Activated CD4-positive, alpha-beta T cell treated with anti-CD3 and anti-CD28 coated beads for 36 hours (primary cell): ENCODE measurements at regions of chrX and their contacts with region 1.

Region 1: DNA sequence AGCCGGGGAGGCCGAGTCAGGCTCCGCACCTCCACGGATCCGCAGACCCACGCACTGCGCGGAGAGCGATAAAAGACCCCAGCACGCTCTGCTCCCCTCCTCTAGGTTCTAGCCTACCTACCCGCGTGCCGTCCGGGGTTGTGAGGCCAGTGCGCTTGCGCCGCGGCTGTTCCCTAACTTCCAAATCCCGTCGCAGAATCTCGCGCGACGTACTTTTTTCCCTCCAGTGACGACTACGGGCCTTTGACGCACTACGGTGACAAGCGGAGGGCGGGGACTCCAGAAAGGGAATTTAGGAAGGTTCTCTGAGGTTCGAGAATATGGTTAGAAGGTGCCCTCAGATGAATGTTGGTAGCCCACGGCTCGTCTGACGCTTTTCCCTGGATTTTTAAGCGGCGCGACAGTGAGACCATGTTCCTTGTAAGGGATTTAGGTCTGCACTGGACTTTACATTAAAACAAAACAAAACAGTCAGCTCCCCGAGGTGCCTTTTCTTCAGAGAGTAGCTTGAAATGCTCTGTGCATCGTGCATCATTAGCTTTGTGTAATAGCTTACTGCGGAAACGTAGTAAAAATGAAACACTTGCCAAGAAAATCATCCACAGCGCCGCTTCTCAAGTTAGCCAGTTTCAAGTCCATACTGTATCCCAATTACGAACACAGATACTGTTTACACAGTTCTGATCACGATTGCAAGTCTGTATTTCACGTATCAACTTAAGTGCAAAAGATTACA is at the start of gene NKRF:
- DNase-seq: peak; percentile 94
- ATAC-seq: peak; percentile 88
- H3K4me3 Mint-ChIP-seq: peak within 1 kb of the TSS; percentile 93
- H3K27ac Mint-ChIP-seq: peak within 1 kb of the TSS; percentile 97
- H3K4me1 Mint-ChIP-seq: peaks cover 34% of the 10 kb centered on the region
- H3K27me3 Mint-ChIP-seq: no peaks in the 10 kb centered on the region
- total RNA-seq, gene NKRF: 23.8 to 25.0 TPM

Region 2: DNA sequence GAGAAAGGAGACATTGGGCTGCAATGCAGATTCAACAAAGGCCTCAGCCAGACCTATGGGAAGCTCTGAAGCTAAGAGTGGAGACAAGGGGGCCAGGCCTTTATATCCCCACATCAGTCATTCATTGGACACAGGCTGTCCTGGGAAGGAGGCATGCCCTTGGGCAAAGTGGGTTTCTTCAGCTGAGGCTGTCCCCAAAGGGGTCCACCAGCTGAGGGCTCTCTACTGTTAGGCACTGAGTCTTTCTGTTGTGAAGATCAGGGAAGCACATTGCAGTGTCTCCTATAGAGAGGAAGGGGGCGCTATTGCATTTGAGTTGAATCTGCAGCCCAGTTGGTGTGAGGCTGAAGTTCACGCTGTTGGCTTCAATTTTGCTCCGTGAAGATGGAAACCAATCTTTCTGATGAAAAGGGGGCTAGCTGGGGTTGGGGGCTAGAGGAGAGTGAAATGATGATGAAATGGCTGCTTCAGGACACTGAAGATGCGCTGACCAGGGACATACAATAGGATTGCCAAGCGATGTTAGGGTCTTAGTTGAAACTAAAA is 90.2 kb before region 1 on chrX:
- CTCF ChIA-PET with region 1: no interaction called
- POLR2A ChIA-PET with region 1: no interaction called
- intact Hi-C with region 1: loop called (anchors 2 to 5 kb)
- DNase-seq: peak; percentile 44
- ATAC-seq: peak; percentile 97
- H3K4me3 Mint-ChIP-seq: no peak overlapping the region
- H3K27ac Mint-ChIP-seq: no peak overlapping the region
- H3K4me1 Mint-ChIP-seq: peaks cover 4% of the 10 kb centered on the region
- H3K27me3 Mint-ChIP-seq: no peaks in the 10 kb centered on the region

Region 3: GRCh38 chrX:119574394-119575266 is 31.8 kb before region 1 on chrX and contains the start of gene UBE2A:
- CTCF ChIA-PET with region 1: interaction called, 4 read pairs
- POLR2A ChIA-PET with region 1: interaction called, 5 read pairs
- intact Hi-C with region 1: loop called in 1 of 2 experiments (anchors 1 kb)
- DNase-seq: peak; percentile 92
- ATAC-seq: peak; percentile 92
- H3K4me3 Mint-ChIP-seq: peak within 1 kb of the TSS; percentile 94
- H3K27ac Mint-ChIP-seq: peak within 1 kb of the TSS; percentile 87
- H3K4me1 Mint-ChIP-seq: peaks cover 24% of the 10 kb centered on the region
- H3K27me3 Mint-ChIP-seq: no peaks in the 10 kb centered on the region
- total RNA-seq, gene UBE2A: 49.2 to 67.9 TPM

Region 4: DNA sequence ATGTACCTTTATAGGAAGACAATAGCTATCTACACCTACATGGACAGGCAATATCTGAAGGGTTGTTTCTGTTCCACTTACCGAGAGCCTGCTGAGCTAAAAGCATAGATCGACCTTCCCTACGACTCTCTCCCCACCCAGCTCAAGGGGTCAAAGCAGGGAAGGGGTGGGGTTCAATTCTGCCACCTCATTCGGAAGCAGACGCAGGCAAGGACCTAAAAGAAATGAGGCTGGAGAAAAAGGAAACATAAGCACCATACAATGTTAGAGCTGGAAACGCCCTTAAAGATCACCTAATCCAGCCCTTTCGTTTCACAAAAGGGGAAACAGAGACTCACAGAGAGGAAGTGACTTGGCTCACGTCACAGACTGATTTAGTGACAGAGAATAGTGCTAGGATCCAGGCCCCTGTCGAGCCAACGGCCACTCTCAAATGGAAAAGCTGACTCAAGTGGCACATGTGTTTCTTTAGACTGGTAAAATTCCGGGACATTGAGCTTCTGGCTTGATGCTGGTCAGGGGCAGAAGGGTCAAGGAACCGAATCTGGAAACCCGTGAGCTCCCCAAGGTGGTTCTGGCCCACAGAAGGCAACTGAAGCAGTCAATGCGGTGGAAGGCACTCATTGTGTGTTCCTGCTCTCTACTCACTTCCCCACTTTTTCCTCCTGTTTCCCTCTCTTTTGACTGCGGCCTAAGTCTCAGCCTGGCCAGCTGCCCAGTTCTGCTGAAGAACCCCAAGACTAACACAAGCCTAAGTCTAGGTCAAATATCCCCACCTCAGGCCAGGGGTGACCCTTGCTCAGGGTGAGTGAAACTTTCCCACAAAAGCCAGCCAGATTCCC is 79.0 kb after region 1 on chrX:
- CTCF ChIA-PET with region 1: no interaction called
- POLR2A ChIA-PET with region 1: interaction called, 5 read pairs
- intact Hi-C with region 1: loop called in 1 of 2 experiments (anchors 2 kb)
- DNase-seq: peak; percentile 73
- ATAC-seq: peak; percentile 51
- H3K4me3 Mint-ChIP-seq: peak overlapping the region; percentile 98
- H3K27ac Mint-ChIP-seq: peak overlapping the region; percentile 98
- H3K4me1 Mint-ChIP-seq: peaks cover 54% of the 10 kb centered on the region
- H3K27me3 Mint-ChIP-seq: no peaks in the 10 kb centered on the region

Region 5: DNA sequence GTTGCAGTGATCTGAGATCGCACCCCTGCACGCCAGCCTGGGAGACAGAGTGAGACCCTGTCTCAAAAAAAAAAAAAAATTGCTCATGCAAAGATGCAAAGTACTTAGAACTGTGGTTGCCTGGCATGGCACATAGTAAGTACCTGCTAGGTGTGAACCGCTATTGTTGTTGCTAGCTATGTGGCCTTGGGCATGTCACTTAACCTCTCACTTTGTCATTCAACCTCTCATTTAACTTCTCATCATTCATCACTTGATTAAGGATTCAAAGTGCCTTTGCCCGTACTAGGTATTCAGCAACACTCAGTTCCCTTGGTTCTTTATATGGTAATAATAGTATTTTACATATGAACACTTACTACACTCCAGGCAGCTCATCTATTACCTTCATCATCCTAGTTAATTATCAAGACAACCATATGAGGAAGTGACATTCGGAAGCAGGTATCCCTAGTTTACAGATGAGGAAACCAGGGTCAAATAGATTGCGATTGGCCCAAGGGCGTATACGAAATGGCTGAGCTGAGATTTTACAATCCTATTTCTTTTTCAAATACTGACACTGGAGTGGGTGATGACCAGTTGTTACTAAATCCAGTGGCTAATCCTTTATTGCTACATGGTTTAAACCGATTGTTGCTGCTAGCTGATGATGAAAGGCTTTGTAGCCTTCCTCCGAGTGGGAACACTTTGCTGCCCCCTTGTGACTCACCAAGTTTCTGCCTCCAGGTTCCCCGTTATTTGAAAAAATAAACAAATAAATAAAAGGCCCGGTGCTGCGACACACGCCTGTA is 123.2 kb after region 1 on chrX:
- CTCF ChIA-PET with region 1: interaction called, 4 read pairs
- POLR2A ChIA-PET with region 1: no interaction called
- intact Hi-C with region 1: loop called (anchors 1 to 5 kb)
- DNase-seq: peak; percentile 74
- ATAC-seq: peak; percentile 60
- H3K4me3 Mint-ChIP-seq: no peak overlapping the region
- H3K27ac Mint-ChIP-seq: no peak overlapping the region
- H3K4me1 Mint-ChIP-seq: peaks cover 6% of the 10 kb centered on the region
- H3K27me3 Mint-ChIP-seq: no peaks in the 10 kb centered on the region

Region 6: GRCh38 chrX:119871599-119872395 is 265.3 kb after region 1 on chrX and contains the starts of genes NDUFA1 and RNF113A:
- CTCF ChIA-PET with region 1: no interaction called
- POLR2A ChIA-PET with region 1: no interaction called
- intact Hi-C with region 1: loop called (anchors 1 to 10 kb)
- DNase-seq: peak; percentile 91
- ATAC-seq: peak; percentile 93
- H3K4me3 Mint-ChIP-seq: peak within 1 kb of the TSS; percentile 100
- H3K27ac Mint-ChIP-seq: peak within 1 kb of the TSS; percentile 99
- H3K4me1 Mint-ChIP-seq: peaks cover 14% of the 10 kb centered on the region
- H3K27me3 Mint-ChIP-seq: no peaks in the 10 kb centered on the region
- total RNA-seq, gene NDUFA1: 37.6 to 101 TPM
- total RNA-seq, gene RNF113A: 26.9 to 29.9 TPM